PC-9 (cell line): ENCODE measurements at regions of chr12 and their contacts with region 1.

Region 1: GRCh38 chr12:121536899-121537813 is 43.7 kb downstream of the KDM2B start:
- DNase-seq: peak; percentile 64 to 83
- H3K4me3 ChIP-seq: peak overlapping the region; percentile 81
- H3K27ac ChIP-seq: no peak overlapping the region
- H3K4me1 ChIP-seq: peaks cover 10% of the 10 kb centered on the region
- H3K27me3 ChIP-seq: no peaks in the 10 kb centered on the region
- CTCF ChIP-seq: no peak

Region 2: DNA sequence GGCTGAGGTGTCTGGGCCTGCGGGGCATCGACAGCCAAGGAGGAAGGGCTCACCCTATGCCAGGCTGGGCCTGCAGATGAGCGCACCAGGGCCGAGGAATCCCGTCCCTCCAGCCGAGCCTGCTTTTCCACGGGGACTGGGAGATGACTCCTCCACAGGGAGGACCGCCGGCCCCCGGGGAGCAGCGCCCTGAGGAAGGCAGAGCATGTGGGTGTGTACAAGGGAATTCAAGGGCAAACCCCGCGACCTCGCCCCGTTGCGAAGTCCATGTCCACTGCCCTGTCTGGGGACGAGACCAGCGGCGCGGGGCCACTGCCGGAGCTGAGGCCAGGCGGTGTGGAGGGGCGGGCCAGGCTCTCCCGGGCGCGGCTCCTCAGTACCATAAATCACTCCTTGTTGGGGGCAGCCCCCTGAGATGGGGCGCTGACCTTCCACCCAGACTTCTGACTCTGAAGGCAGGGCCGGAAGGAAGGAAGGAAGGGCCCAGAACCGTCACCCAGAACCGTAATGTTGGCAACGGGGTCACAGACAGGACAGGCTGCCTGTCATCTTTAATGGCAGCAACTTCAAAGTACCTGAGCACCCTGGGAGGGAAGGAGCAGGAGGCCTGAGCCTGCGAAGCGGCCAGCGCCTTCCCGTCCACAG is 84.7 kb before region 1 on chr12:
- CTCF ChIA-PET with region 1: interaction called, 17 read pairs
- POLR2A ChIA-PET with region 1: no interaction called
- intact Hi-C with region 1: no loop called
- DNase-seq: peak; percentile 81 to 88
- H3K4me3 ChIP-seq: peak overlapping the region; percentile 52; the same call in 1 of the 2 replicates
- H3K27ac ChIP-seq: peak overlapping the region; percentile 62
- H3K4me1 ChIP-seq: peaks cover 21% of the 10 kb centered on the region
- H3K27me3 ChIP-seq: no peaks in the 10 kb centered on the region
- CTCF ChIP-seq: no peak

Region 3: GRCh38 chr12:121513464-121514183 is 23.5 kb before region 1 on chr12:
- CTCF ChIA-PET with region 1: no interaction called
- POLR2A ChIA-PET with region 1: interaction called, 44 read pairs
- intact Hi-C with region 1: no loop called
- DNase-seq: peak; percentile 57 to 75
- H3K4me3 ChIP-seq: no peak overlapping the region
- H3K27ac ChIP-seq: no peak overlapping the region
- H3K4me1 ChIP-seq: no peaks in the 10 kb centered on the region
- H3K27me3 ChIP-seq: no peaks in the 10 kb centered on the region
- CTCF ChIP-seq: no peak; the same call in 1 of the 2 replicates

Region 4: GRCh38 chr12:121550974-121551634 is 13.9 kb after region 1 on chr12:
- CTCF ChIA-PET with region 1: interaction called, 13 read pairs
- POLR2A ChIA-PET with region 1: no interaction called
- intact Hi-C with region 1: no loop called
- DNase-seq: no peak
- H3K4me3 ChIP-seq: no peak overlapping the region
- H3K27ac ChIP-seq: no peak overlapping the region
- H3K4me1 ChIP-seq: no peaks in the 10 kb centered on the region
- H3K27me3 ChIP-seq: no peaks in the 10 kb centered on the region
- CTCF ChIP-seq: no peak